AG04449 (cell line): ENCODE measurements at regions of chr3 and their contacts with region 1.

Region 1: DNA sequence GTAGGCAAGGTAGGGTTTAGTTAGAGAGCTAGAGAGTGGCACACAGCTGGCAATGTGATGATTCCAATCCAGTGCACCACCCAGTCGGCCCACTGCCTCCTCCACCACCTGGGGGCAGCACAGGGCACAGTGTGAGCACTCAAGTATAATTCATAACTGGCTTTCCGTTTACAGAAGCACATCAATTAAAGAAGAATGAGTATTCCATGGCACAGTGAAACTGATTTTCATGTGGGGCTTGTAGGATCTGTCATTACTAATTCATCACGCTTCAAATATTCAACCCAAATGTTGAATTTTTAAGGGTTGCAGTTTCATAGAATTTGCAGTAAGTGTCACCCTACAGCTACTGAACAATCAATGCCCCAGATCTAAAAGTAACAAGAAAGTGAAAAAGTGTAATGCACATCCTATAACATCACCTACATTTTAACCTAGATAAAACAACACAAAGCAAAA is 149.9 kb downstream of the IGSF11 start:
- DNase-seq: no peak
- H3K4me3 ChIP-seq: no peak overlapping the region
- CTCF ChIP-seq: peak; percentile 95

Region 2: DNA sequence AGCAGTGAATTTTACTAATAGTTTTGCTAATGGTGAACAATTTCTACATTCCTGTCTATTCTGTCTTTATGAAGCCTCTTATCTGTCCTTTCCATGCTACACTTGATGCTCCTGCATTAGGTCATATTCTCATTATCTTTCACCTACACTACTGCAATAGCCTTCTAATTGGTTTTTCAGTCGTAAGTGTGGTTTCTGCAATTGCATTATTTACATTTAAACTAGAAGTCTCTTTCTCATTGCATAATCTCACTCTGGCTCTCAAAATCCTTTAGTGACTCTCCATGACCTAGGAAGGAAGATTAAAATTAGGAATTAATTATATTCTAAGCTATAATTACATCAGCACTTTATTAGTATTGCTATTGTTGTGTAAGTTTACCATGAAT is 536.6 kb before region 1 on chr3:
- CTCF ChIA-PET with region 1: no interaction called
- POLR2A ChIA-PET with region 1: no interaction called
- DNase-seq: no peak
- H3K4me3 ChIP-seq: no peak overlapping the region
- CTCF ChIP-seq: no peak

Region 3: DNA sequence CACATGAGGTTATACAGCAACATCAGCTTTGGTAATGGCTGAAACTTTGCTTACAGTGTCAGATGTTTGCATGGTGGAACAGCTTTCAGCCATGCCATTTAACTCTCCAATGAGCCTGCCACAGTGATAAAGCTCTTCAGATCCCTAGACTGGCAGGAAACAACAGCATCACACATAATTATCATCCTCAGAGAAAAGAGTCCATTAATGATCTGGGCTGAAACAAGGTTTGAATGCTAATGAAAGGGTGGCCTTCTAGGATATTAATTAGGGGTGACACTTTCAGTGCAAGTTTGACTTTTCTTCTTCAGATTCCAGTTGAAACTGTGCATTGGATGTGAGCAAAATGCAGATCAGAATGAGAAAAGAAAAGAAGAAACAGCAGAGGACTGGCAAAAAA is 16.7 kb before region 1 on chr3:
- CTCF ChIA-PET with region 1: interaction called, 25 read pairs
- POLR2A ChIA-PET with region 1: no interaction called
- DNase-seq: no peak
- H3K4me3 ChIP-seq: no peak overlapping the region
- CTCF ChIP-seq: no peak

Region 4: DNA sequence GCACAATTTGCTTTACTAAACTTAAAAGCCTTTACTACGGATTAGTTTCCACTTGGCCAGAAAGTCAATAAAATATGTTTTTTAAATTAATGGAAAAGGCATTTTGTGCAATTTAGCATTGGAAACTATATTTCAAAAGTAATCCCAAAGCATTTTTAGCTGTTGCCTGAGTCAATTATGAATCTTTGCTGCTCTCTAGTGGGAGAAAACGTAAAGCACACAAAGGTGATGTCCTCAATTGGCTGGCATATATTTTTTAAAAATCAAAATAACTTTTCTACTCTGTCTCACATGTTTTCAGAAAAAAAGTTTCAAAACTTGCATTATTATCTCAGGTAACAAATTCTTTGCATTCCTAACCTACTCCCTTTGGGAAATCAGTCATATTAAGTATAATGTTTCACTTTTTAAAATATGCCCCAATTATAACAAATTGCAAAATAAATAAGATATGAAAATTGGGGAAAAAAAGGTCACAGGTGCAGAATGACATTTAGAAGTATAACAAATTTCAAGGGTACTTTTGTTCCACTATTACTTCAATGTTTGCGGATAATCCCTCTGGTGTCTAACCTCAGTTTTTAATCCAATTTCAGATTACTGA is 213.9 kb after region 1 on chr3:
- CTCF ChIA-PET with region 1: interaction called, 310 read pairs
- POLR2A ChIA-PET with region 1: no interaction called
- DNase-seq: peak; percentile 2
- H3K4me3 ChIP-seq: no peak overlapping the region
- CTCF ChIP-seq: peak; percentile 44

Region 5: DNA sequence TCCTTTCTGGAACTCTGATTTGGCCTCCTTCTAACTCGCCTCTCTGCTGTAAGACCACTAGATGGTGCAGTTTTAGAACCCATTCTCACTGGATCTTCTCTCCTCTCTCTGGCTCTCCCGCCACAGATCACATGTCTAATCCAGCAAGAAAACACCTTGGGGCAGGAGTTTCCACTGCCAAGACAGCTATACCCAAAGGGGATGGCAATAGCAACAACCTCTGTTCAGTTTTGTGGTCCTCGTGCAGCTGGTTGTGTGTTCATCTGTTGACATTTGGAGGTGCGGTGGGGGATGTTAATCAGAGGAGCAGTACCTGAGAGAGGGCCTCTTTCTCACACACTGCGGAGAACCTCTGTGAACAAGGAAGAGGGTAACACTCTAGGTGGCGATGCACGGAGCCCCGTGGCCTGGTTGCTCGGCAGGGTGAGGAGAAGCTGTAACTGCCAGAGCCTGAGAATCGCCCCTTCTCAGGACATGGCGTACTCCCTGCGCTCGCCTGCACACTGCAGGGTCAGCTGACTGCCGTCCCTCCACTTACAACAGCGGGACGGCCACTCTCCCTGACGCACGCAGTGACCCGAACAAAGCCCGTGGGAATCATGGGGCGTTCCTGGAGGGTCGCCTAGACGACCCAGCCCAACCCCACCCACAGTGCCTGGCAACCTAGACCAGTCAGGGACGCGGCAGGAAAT is 260.9 kb after region 1 on chr3 and contains the start of gene TEX55:
- CTCF ChIA-PET with region 1: interaction called, 10 read pairs
- POLR2A ChIA-PET with region 1: no interaction called
- DNase-seq: no peak
- H3K4me3 ChIP-seq: no peak within 1 kb of the TSS
- CTCF ChIP-seq: peak; percentile 75